B cell (primary cell): ENCODE measurements at regions of chr13 and their contacts with region 1.

Region 1: DNA sequence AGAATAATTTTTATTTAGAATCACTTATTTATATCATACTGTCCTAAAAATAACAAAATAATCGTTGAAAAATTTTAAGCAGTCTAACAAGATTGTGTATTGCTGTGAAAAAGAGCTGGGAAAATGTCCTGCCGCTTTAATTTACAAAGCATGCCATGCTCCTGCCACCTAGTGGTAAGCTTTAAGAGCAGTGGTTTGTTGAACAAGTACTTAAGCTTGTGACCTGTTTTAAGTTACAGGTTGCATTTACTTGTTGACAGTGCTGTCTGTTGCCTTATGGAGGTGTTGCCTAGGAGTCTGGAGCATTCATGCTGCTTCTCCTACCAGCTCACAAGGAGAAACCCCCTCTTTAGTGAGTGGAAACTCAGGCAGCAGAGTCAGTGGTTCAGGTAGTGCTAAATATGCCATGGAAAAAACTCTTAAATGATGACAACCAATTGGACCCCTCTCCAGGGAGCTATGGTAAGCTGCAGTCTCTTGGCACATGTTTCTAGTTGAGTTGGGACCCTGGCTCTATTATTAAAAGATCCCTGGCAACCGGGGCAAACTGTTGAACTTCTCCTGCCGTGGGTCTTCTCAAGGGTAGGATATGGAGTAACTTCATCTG is 68.4 kb downstream of the SPATA13 start:
- DNase-seq: peak; percentile 66
- ATAC-seq: peak; percentile 53
- H3K4me3 ChIP-seq: no peak overlapping the region
- H3K4me3 Mint-ChIP-seq: no peak overlapping the region
- H3K27ac ChIP-seq: no peak overlapping the region
- H3K27ac Mint-ChIP-seq: no peak overlapping the region
- H3K4me1 ChIP-seq: peaks cover 10 to 20% of the 10 kb centered on the region in 2 donors
- H3K4me1 Mint-ChIP-seq: peaks cover 26% of the 10 kb centered on the region
- H3K27me3 ChIP-seq: no peaks in the 10 kb centered on the region
- H3K27me3 Mint-ChIP-seq: no peaks in the 10 kb centered on the region
- CTCF ChIP-seq: peak; percentile 93

Region 2: DNA sequence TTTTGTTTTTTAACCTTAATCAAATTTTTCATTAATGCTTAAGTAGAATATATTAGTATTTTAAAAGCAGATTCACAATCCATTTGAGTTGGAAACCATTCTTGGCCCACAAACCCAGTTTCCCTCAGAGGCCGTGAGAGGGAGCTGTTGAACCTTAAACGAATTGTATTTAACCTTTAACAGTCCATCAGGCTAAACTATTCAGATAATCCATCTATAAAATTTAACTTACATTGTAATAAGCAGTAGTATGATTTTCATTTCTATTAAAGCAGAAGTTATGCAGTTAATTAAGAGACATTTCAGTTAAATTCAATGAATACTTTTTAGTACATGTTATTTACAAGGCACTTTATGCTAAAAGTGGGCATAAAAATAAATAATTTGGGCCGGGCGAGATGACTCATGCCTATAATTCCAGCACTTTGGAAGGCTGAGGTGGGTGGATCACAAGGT is 208.6 kb before region 1 on chr13:
- CTCF ChIA-PET with region 1: interaction called, 21 read pairs
- POLR2A ChIA-PET with region 1: no interaction called
- intact Hi-C with region 1: loop called (anchors 2 kb)
- DNase-seq: peak; percentile 34
- ATAC-seq: no peak
- H3K4me3 ChIP-seq: no peak overlapping the region
- H3K4me3 Mint-ChIP-seq: no peak overlapping the region
- H3K27ac ChIP-seq: no peak overlapping the region
- H3K27ac Mint-ChIP-seq: no peak overlapping the region
- H3K4me1 ChIP-seq: no peaks in the 10 kb centered on the region
- H3K4me1 Mint-ChIP-seq: no peaks in the 10 kb centered on the region
- H3K27me3 ChIP-seq: no peaks in the 10 kb centered on the region
- H3K27me3 Mint-ChIP-seq: no peaks in the 10 kb centered on the region
- CTCF ChIP-seq: peak; percentile 67

Region 3: GRCh38 chr13:24053519-24054251 is 175.3 kb before region 1 on chr13:
- CTCF ChIA-PET with region 1: interaction called, 29 read pairs
- POLR2A ChIA-PET with region 1: no interaction called
- intact Hi-C with region 1: loop called (anchors 2 kb)
- DNase-seq: peak; percentile 78
- ATAC-seq: peak; percentile 97
- H3K4me3 ChIP-seq: no peak overlapping the region
- H3K4me3 Mint-ChIP-seq: no peak overlapping the region
- H3K27ac ChIP-seq: no peak overlapping the region
- H3K27ac Mint-ChIP-seq: peak overlapping the region; percentile 51
- H3K4me1 ChIP-seq: no peaks in the 10 kb centered on the region
- H3K4me1 Mint-ChIP-seq: peaks cover 10% of the 10 kb centered on the region
- H3K27me3 ChIP-seq: peaks cover 0 to 12% (median 2%) of the 10 kb centered on the region in 4 experiments
- H3K27me3 Mint-ChIP-seq: peaks cover 25% of the 10 kb centered on the region
- CTCF ChIP-seq: peak; percentile 67

Region 4: GRCh38 chr13:24362435-24362952 is 133.5 kb after region 1 on chr13:
- CTCF ChIA-PET with region 1: no interaction called
- POLR2A ChIA-PET with region 1: no interaction called
- intact Hi-C with region 1: no loop called
- DNase-seq: no peak
- ATAC-seq: no peak
- H3K4me3 ChIP-seq: no peak overlapping the region
- H3K4me3 Mint-ChIP-seq: no peak overlapping the region
- H3K27ac ChIP-seq: no peak overlapping the region
- H3K27ac Mint-ChIP-seq: no peak overlapping the region
- H3K4me1 ChIP-seq: no peaks in the 10 kb centered on the region
- H3K4me1 Mint-ChIP-seq: no peaks in the 10 kb centered on the region
- H3K27me3 ChIP-seq: no peaks in the 10 kb centered on the region
- H3K27me3 Mint-ChIP-seq: no peaks in the 10 kb centered on the region
- CTCF ChIP-seq: no peak